Activated naive CD4-positive, alpha-beta T cell treated with anti-CD3 and anti-CD28 coated beads for 36 hours (primary cell): ENCODE measurements at regions of chr1 and their contacts with region 1.

Region 1: DNA sequence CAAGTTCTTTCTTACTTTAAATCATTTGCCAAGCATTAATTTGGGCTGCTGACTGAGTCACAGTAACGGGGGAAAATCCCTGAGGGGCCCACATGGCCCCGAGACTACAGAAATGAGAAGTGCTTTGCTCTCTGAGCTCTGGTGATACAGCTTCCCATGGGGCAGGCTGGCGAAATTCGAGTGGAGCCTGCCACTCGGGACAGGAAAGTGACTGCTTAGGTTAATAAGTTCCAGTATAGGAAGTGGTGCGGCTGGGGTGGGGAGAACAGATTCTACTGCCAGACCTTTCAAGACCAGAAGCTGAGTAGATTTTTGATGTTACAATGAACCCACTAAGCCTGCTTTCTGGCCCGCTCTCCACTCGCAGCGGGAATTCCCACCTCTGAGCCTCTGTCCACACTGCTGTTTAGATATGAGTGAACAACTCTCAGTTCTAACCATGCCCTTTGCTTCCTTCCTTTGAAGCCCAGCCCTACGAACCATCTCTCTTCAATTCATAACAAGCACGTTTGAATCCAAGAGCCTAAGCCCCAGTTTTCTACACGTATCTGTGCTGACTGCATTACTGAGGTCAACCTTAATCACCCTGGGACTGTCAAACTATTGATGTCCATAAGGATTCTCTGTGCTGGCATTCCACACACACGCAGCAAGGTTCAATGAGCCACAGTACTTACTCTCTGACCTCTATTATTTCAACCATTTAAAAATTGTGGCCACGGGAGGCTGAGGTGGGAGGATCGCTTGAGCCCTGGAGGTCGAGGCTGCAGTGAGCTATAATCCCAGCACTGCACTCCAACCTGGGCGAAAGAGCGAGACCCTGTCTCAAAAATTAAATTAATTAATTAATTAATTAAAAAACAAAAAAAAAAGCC is 9.6 kb downstream of the ZBTB17 start:
- DNase-seq: peak; percentile 94
- H3K4me3 Mint-ChIP-seq: peak overlapping the region; percentile 68
- H3K27ac Mint-ChIP-seq: peak overlapping the region; percentile 97
- H3K4me1 Mint-ChIP-seq: peaks cover 80% of the 10 kb centered on the region
- H3K27me3 Mint-ChIP-seq: no peaks in the 10 kb centered on the region

Region 2: GRCh38 chr1:15251857-15252835 is 714.2 kb before region 1 on chr1:
- CTCF ChIA-PET with region 1: no interaction called
- intact Hi-C with region 1: loop called (anchors 2 kb)
- DNase-seq: no peak
- H3K4me3 Mint-ChIP-seq: no peak overlapping the region
- H3K27ac Mint-ChIP-seq: peak overlapping the region; percentile 74
- H3K4me1 Mint-ChIP-seq: peaks cover 54% of the 10 kb centered on the region
- H3K27me3 Mint-ChIP-seq: peaks cover 21% of the 10 kb centered on the region

Region 3: GRCh38 chr1:15617175-15617880 is 349.0 kb before region 1 on chr1 and contains the start of gene DDI2:
- CTCF ChIA-PET with region 1: no interaction called
- intact Hi-C with region 1: loop called (anchors 2 kb)
- DNase-seq: peak; percentile 96
- H3K4me3 Mint-ChIP-seq: peak within 1 kb of the TSS; percentile 90
- H3K27ac Mint-ChIP-seq: peak within 1 kb of the TSS; percentile 93
- H3K4me1 Mint-ChIP-seq: peaks cover 42% of the 10 kb centered on the region
- H3K27me3 Mint-ChIP-seq: no peaks in the 10 kb centered on the region
- total RNA-seq, gene DDI2: 19.6 to 20.7 TPM

Region 4: GRCh38 chr1:15902882-15903281 is 63.4 kb before region 1 on chr1:
- CTCF ChIA-PET with region 1: no interaction called
- intact Hi-C with region 1: loop called (anchors 2 kb)
- DNase-seq: no peak
- H3K4me3 Mint-ChIP-seq: no peak overlapping the region
- H3K27ac Mint-ChIP-seq: no peak overlapping the region
- H3K4me1 Mint-ChIP-seq: peaks cover 37% of the 10 kb centered on the region
- H3K27me3 Mint-ChIP-seq: no peaks in the 10 kb centered on the region

Region 5: DNA sequence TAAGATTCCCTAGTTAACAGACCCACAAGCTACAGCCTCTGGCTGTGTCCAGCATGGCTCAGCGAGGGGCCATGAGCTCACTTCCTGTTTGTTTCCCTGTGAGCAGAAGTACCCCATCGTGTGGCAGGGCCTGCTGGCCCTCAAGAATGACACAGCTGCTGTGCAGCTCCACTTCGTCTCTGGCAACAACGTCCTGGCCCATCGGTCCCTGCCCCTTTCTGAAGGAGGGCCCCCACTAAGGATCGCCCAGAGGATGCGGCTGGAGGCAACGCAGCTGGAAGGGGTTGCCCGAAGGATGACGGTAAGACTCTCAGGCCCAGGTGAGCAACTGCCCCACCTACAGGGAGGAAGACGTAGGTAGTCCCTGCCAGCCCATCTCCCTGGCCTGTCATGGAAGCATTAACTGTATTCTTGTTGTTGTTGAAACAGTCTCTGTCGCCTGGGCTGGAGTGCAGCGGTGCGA is 28.6 kb before region 1 on chr1:
- CTCF ChIA-PET with region 1: no interaction called
- intact Hi-C with region 1: no loop called
- DNase-seq: no peak
- H3K4me3 Mint-ChIP-seq: no peak overlapping the region
- H3K27ac Mint-ChIP-seq: peak overlapping the region; percentile 84
- H3K4me1 Mint-ChIP-seq: no peaks in the 10 kb centered on the region
- H3K27me3 Mint-ChIP-seq: no peaks in the 10 kb centered on the region

Region 6: DNA sequence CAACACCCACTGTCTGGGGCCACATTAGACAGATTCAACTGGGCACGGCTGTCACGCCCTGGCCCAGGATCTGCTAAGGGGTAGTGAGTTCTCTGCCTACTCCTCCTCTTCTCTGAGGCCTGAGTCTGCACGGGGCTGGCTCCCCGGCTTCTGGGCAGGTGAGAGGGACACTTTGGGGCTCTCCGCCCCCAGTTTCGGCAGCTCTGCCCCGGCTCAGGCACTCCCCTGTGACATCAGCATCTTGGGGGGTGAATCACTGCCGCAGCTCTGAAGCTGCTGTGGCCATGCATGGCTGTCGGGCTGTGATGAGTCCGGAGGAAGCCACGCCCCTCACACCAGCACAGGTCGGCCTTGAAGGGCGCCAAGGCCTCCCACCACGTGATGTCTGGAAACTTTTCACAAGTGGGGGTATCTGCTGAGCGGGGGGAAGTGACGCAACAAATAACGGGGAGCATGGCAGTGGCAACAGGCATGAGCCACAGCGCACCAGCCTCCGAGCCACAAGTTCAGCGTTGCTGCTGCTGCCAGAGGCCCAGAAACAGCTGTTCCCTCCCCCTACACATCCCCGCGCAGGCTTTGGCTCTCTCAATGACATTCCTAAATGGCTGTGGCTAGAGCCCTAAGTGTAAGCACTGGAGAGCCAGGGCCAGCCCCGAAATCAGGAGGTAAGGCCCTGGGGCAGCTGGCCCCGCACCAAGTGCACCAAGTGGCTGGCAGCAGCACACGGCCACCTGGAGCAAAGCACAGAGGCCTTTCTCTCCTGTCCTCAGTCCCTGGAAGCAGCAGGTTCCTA is 16.7 kb before region 1 on chr1:
- CTCF ChIA-PET with region 1: interaction called, 6 read pairs
- intact Hi-C with region 1: loop called (anchors 1 kb)
- DNase-seq: peak; percentile 80
- H3K4me3 Mint-ChIP-seq: peak overlapping the region; percentile 16
- H3K27ac Mint-ChIP-seq: peak overlapping the region; percentile 95
- H3K4me1 Mint-ChIP-seq: peaks cover 72% of the 10 kb centered on the region
- H3K27me3 Mint-ChIP-seq: no peaks in the 10 kb centered on the region

Region 7: DNA sequence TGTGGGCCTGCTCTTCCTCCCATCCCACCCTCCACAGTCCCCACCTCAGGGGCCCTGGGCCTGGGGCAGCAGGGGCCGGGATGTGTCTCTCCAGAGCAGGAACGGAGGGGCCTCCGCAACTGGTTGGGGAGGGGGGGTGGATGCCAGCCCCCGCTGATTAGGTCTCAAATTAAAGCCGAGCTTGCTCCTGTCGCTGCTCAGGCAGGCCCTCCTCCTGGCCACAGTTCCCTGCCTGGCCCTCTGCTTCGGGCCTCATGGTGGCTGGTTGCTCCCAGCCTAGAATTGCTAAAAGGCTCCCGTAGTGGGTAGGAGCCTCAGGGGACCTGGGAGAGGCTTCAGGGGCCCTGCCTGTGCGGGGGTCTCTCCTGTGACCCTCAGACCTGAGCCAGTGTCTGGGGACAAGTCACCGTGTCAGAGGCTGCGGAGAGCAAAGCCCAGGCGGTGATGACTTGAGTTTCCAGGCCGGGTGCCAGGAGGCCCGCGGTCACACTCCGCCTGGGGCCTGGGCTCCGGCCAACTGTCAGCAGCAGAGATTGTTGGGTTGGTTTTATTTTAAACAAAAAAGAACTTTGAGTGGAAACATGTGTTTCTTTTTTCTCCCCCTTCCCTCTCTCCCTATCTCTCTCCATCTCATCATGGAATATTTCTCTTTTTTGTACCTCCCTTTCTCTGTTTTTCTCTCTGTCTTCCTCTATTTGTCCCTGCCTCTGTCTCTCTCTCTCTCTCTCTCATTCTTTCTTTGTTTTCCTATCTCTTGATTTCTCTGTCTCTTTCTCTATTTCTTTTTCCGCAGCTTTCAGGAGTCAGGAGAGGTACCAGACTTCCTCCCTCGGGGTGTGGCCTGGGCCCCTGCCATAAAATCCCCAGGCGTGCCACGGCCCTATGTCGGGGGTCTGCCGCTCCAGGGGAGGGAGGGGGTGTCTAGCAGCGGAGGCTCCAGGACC is 209.6 kb after region 1 on chr1:
- CTCF ChIA-PET with region 1: no interaction called
- intact Hi-C with region 1: no loop called
- DNase-seq: no peak
- H3K4me3 Mint-ChIP-seq: no peak overlapping the region
- H3K27ac Mint-ChIP-seq: no peak overlapping the region
- H3K4me1 Mint-ChIP-seq: no peaks in the 10 kb centered on the region
- H3K27me3 Mint-ChIP-seq: no peaks in the 10 kb centered on the region

Region 8: DNA sequence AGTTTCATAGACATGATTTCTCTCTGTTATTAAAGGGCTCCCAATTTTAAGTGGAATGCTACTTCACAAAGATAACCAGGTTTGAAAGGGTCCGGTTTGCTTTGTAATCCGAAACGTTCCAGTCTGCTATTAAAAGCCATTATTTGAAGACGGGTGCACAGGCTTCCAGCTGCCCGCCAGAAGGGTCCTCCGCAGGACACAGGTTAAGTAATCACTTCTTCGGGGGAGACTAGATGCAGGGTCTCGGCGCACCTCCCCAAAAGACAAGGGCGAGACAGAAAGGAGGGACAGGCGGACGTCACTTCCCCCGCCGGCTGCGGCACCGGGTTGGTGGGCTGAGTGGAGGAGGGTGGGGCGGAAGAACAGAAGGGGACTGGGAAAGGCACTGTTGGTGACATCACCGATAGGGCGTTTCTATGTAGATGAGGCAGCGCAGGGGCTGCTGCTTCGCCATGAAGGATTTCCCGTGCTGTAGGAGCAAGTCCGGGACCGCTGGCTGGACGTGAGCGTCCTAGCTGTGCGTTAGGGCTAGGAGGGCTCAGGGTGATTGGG is 938.3 kb after region 1 on chr1:
- CTCF ChIA-PET with region 1: no interaction called
- intact Hi-C with region 1: loop called (anchors 10 kb)
- DNase-seq: peak; percentile 100
- H3K4me3 Mint-ChIP-seq: no peak overlapping the region
- H3K27ac Mint-ChIP-seq: no peak overlapping the region
- H3K4me1 Mint-ChIP-seq: peaks cover 32% of the 10 kb centered on the region
- H3K27me3 Mint-ChIP-seq: no peaks in the 10 kb centered on the region